ENCODE measurements at regions of chr14 and their contacts with region 1.

Region 1: GRCh38 chr14:73472185-73473114 is 14.1 kb upstream of the NUMB start:
- DNase-seq: no peak
- ATAC-seq: peak; percentile 17
- H3K4me3 Mint-ChIP-seq: no peak overlapping the region
- H3K27ac Mint-ChIP-seq: no peak overlapping the region
- H3K4me1 Mint-ChIP-seq: peaks cover 17% of the 10 kb centered on the region
- H3K27me3 Mint-ChIP-seq: no peaks in the 10 kb centered on the region
- CTCF ChIP-seq: peak; percentile 78

Region 2: GRCh38 chr14:73173092-73173735 is 299.2 kb before region 1 on chr14:
- CTCF ChIA-PET with region 1: interaction called, 23 read pairs
- POLR2A ChIA-PET with region 1: no interaction called
- intact Hi-C with region 1: loop called (anchors 1 kb)
- DNase-seq: peak; percentile 27
- ATAC-seq: peak; percentile 27
- H3K4me3 Mint-ChIP-seq: no peak overlapping the region
- H3K27ac Mint-ChIP-seq: no peak overlapping the region
- H3K4me1 Mint-ChIP-seq: peaks cover 6% of the 10 kb centered on the region
- H3K27me3 Mint-ChIP-seq: no peaks in the 10 kb centered on the region
- CTCF ChIP-seq: peak; percentile 66

Region 3: GRCh38 chr14:73441286-73441685 is 31.2 kb before region 1 on chr14:
- CTCF ChIA-PET with region 1: interaction called, 10 read pairs
- POLR2A ChIA-PET with region 1: interaction called, 3 read pairs
- intact Hi-C with region 1: no loop called
- DNase-seq: no peak
- ATAC-seq: no peak
- H3K4me3 Mint-ChIP-seq: no peak overlapping the region
- H3K27ac Mint-ChIP-seq: no peak overlapping the region
- H3K4me1 Mint-ChIP-seq: peaks cover 9% of the 10 kb centered on the region
- H3K27me3 Mint-ChIP-seq: no peaks in the 10 kb centered on the region
- CTCF ChIP-seq: no peak

Region 4: DNA sequence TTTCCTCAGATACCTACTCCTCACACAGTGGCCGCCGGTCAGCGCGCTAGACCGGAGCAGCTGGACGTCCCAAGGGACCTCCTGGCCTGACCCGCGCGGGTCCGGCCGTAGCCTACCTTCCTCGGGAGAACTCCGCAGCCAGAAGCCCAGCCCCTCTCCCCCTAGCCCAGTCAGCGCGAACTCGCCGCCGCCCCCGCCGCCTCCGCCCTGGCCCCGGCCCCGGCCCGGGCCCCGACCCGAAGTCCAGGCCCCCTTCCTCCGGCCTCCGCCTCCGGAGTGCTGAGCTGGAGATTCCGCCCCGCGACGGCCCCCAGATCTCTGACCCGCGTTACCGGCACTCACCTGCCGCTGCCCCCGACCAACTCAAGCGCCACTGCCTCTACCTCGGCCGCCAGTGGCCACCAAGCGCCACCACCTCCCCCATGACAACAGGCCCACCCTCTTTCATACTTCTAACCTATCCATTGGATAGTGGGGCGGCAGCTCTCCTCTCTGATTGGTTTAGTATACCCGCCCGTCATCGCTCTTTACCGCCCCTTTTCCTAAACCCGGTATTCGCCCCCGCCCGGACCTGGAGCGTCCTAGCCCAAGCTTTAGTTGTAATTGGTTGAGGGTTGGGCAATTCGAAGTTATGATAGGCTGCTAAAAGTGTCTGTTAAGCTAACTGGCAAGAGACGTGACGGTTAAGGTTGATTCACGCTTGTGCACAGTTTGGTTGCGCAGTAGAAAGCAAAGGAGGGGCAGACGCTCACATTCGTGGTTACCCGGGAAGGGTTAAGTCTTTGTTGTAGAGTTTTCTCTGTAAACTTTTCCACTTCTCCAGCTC is 14.1 kb before region 1 on chr14 and contains the start of gene NUMB:
- CTCF ChIA-PET with region 1: interaction called, 41 read pairs
- POLR2A ChIA-PET with region 1: interaction called, 28 read pairs
- intact Hi-C with region 1: no loop called
- DNase-seq: peak; percentile 99
- ATAC-seq: peak; percentile 97
- H3K4me3 Mint-ChIP-seq: peak within 1 kb of the TSS; percentile 89
- H3K27ac Mint-ChIP-seq: peak within 1 kb of the TSS; percentile 91
- H3K4me1 Mint-ChIP-seq: peaks cover 37% of the 10 kb centered on the region
- H3K27me3 Mint-ChIP-seq: no peaks in the 10 kb centered on the region
- CTCF ChIP-seq: no peak
- total RNA-seq, gene NUMB: 31.8 to 33.0 TPM

Region 5: GRCh38 chr14:73568381-73568781 is 95.9 kb after region 1 on chr14:
- CTCF ChIA-PET with region 1: no interaction called
- POLR2A ChIA-PET with region 1: no interaction called
- intact Hi-C with region 1: no loop called
- DNase-seq: peak; percentile 43
- ATAC-seq: peak; percentile 8
- H3K4me3 Mint-ChIP-seq: peak overlapping the region; percentile 88
- H3K27ac Mint-ChIP-seq: peak overlapping the region; percentile 99
- H3K4me1 Mint-ChIP-seq: peaks cover 43% of the 10 kb centered on the region
- H3K27me3 Mint-ChIP-seq: no peaks in the 10 kb centered on the region
- CTCF ChIP-seq: no peak

Measured in activated CD8-positive, alpha-beta T cell treated with anti-CD3 and anti-CD28 coated beads for 36 hours (primary cell).